Left lung (tissue), 14 donors: ENCODE measurements at regions of chr11 and their contacts with region 1.

Region 1: DNA sequence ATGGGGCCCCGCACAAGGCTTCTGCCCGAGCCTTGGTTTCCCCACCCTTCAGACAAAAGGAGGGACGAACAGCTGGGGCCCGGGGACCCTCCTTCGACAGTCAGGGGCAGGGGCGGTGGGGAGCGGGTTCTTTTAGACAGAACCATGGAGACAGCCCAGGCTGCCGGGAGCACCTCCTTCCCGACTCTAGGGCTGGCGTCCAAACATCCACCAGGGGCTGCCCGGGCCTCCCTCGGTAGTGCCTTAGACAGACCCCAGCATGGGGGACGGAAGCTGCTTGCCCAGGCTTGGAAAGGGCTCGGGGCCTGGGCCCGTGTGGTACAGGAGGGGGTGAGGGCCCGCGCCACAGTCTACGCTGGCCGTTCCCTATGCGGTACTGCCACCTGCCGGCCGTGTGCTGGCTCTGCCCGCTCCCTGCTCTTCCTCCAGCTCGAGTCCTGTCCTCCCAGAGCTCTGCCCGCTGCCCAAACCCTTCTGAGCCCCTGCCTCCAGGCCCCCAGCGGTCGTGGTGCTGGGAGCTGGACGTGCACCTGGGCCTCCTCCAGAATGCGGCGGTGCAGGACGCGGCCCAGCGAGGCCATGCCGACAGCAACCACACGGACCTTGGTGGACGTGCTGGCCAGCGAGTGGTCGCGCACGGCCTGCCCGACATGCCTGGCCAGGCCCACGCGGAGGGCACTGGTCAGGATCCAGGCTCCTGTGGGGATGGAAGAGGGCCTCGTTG is 20.1 kb downstream of the TSSC4 start:
- DNase-seq: peak; percentile 73 to 93 (median 81)
- ATAC-seq: peak; percentile 97
- H3K4me3 ChIP-seq: no peak overlapping the region
- H3K27ac ChIP-seq: no peak overlapping the region
- H3K4me1 ChIP-seq: peaks cover 0 to 14% of the 10 kb centered on the region in 2 donors
- H3K27me3 ChIP-seq: peaks cover 0 to 16% of the 10 kb centered on the region in 2 donors
- CTCF ChIP-seq: peak; percentile 90 to 96

Region 2: DNA sequence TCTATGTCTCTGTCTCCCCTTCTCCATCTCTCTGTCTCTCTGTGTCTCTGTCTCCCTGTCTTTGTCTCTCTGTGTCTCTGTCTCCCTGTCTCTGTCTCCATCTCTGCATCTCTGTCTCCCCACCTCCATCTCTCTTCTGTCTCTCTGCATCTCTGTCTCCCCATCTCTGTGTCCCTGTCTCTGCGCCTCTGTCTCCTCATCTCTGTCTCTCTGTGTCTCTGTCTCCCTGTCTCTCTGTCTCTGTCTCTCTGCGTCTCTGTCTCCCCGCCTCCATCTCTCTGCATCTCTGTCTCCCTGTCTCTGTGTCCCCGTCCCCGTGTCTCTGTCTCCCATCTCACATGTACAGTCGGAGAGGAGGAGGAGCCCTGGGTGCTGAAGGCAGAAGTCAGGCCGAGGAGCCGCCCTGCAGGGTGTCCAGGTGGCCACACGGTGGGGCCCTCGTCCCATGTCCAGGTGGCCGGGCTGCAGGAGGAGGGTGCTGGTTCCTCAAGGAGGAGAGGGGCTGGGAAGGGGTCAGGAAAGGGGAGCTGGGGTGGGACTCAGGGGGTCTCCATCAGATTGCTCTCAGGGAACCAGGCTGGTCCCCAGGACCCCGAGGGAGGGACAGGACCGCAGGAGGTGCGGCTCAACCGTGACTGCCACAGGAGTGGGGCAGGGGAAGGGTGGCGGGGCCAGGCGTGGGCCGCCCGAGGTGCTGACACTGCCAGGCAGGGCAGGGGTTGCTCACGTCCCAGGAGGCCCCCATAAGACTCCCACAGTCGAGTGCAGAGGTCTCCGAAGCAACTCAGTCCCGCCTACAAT is 223.5 kb before region 1 on chr11:
- intact Hi-C with region 1: loop called (anchors 2 to 10 kb)
- DNase-seq: peak; percentile 55 to 92 (median 78)
- ATAC-seq: peak; percentile 91
- H3K4me3 ChIP-seq: no peak overlapping the region
- H3K27ac ChIP-seq: no peak overlapping the region
- H3K4me1 ChIP-seq: no peaks in the 10 kb centered on the region
- H3K27me3 ChIP-seq: peaks cover 0 to 14% of the 10 kb centered on the region in 2 donors
- CTCF ChIP-seq: peak; percentile 70 to 88

Region 3: GRCh38 chr11:2305140-2305840 is 115.4 kb before region 1 on chr11:
- intact Hi-C with region 1: loop called (anchors 2 to 10 kb)
- DNase-seq: peak; percentile 66 to 97 (median 86)
- ATAC-seq: peak; percentile 85
- H3K4me3 ChIP-seq: no peak overlapping the region
- H3K27ac ChIP-seq: peak overlapping the region; percentile 64 to 65
- H3K4me1 ChIP-seq: peaks cover 16 to 73% of the 10 kb centered on the region in 2 donors
- H3K27me3 ChIP-seq: no peaks in the 10 kb centered on the region
- CTCF ChIP-seq: peak; percentile 87 to 97